Calu3 (cell line): ENCODE measurements at regions of chr14 and their contacts with region 1.

Region 1: GRCh38 chr14:78022059-78022458 is 148.1 kb upstream of the NRXN3 start:
- DNase-seq: peak; percentile 82
- H3K4me3 Mint-ChIP-seq: no peak overlapping the region
- H3K27ac Mint-ChIP-seq: no peak overlapping the region
- H3K4me1 Mint-ChIP-seq: no peaks in the 10 kb centered on the region
- H3K27me3 Mint-ChIP-seq: no peaks in the 10 kb centered on the region
- CTCF ChIP-seq: peak; percentile 68

Region 2: DNA sequence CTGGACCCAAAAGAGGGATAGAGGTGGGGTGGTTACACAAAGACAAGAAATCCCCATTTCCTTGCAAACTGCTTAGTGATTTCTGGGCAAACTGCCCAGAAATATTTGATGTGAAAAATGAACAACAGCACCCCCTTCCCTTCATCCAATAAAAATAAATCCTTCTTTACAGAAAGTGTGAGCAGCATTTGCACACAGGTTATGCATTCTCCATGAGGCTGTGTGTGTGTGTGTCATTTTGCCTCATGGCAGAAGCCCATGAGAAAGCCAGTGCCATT is 130.9 kb after region 1 on chr14:
- CTCF ChIA-PET with region 1: no interaction called
- intact Hi-C with region 1: loop called (anchors 1 kb)
- DNase-seq: peak; percentile 13
- H3K4me3 Mint-ChIP-seq: no peak overlapping the region
- H3K27ac Mint-ChIP-seq: no peak overlapping the region
- H3K4me1 Mint-ChIP-seq: no peaks in the 10 kb centered on the region
- H3K27me3 Mint-ChIP-seq: peaks cover 61% of the 10 kb centered on the region
- CTCF ChIP-seq: no peak

Region 3: GRCh38 chr14:78566026-78566858 is 544.2 kb after region 1 on chr14:
- CTCF ChIA-PET with region 1: interaction called, 14 read pairs
- intact Hi-C with region 1: loop called (anchors 1 kb)
- DNase-seq: peak; percentile 80
- H3K4me3 Mint-ChIP-seq: no peak overlapping the region
- H3K27ac Mint-ChIP-seq: no peak overlapping the region
- H3K4me1 Mint-ChIP-seq: no peaks in the 10 kb centered on the region
- H3K27me3 Mint-ChIP-seq: peaks cover 33% of the 10 kb centered on the region
- CTCF ChIP-seq: peak; percentile 57